ENCODE measurements at regions of chr4 and their contacts with region 1.

Region 1: GRCh38 chr4:169791527-169792156 is 33.9 kb upstream of the HPF1 start:
- DNase-seq: peak; percentile 28 to 95 (median 66)

Region 2: GRCh38 chr4:169757575-169758184 is 34.0 kb before region 1 on chr4 and contains the start of gene HPF1:
- intact Hi-C with region 1: loop called (anchors 1 kb)
- DNase-seq: peak; percentile 85 to 99 (median 92)

Measured in posterior cingulate gyrus (tissue), 11 donors.